Activated CD4-positive, alpha-beta T cell treated with anti-CD3 and anti-CD28 coated beads, Interleukin-2, amount 10 ng/mL, durations not matched to agents 7 days and 5 days (primary cell): ENCODE measurements at regions of chr17 and their contacts with region 1.

Region 1: DNA sequence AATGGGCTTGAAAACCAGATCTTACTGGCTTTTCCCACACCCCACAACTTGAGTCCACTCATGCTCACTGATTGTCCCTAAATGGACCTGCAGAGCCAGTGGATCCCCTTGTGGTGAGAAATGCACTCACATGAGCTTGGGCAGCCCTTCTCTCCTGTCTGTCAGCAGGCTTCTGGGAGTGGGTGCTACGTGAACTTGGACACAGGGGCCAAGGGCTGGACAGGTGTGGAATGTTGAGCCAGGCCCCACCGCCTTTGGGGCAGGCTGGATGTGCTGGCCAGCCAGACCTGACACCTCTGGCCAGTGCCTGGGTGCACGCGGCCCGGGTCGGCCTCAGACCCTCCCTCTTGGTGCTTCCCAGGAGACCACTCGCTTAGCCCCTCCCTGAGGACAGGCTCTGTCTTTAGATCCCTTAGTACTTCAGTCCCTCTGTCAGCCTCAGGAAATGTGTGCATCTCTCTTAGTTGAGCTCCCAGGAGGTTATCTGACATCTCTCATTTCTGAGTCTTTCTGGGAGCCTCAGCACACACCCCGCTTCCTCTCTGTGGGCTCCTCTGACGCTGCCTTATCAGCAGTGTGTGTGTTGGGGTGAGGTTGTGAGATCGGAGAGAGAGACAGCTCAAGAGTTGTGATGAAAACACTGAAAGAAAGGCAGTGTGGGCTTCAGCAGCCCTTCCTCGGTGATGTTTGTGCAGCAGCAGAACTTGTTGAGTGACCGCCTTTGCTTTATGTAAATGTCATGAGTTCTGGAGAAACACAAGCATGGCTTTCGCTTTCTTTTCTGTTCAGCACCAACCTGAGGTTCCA is 117.0 kb downstream of the RAB11FIP4 start:
- DNase-seq: peak; percentile 88
- H3K4me3 Mint-ChIP-seq: peak overlapping the region; percentile 77
- H3K27ac Mint-ChIP-seq: peak overlapping the region; percentile 100
- H3K4me1 Mint-ChIP-seq: peaks cover 55% of the 10 kb centered on the region
- H3K27me3 Mint-ChIP-seq: no peaks in the 10 kb centered on the region

Region 2: DNA sequence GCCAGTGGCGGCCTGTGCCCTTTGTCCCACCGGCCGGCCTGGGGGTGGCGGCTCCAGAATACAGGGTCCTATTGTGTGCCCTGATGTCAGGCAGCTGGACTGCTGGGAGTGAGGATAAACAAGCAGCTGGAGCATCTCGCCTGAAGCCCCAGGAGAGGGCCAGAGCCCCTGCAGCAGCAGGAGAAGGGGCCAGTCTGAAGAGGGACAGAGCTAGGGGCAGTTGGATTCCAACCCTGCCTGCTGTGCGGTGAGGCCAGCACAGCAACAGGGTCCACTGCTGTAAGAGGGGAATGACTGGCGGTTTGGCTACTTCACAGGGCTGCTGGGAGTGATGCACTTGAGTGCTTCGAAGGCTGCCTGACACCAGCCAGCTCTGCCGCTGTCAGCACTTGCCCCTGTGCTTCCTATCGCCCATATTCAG is 92.0 kb before region 1 on chr17:
- CTCF ChIA-PET with region 1: no interaction called
- POLR2A ChIA-PET with region 1: no interaction called
- DNase-seq: no peak
- H3K4me3 Mint-ChIP-seq: no peak overlapping the region
- H3K27ac Mint-ChIP-seq: no peak overlapping the region
- H3K4me1 Mint-ChIP-seq: no peaks in the 10 kb centered on the region
- H3K27me3 Mint-ChIP-seq: no peaks in the 10 kb centered on the region

Region 3: GRCh38 chr17:31487648-31488263 is 20.7 kb before region 1 on chr17:
- CTCF ChIA-PET with region 1: interaction called, 9 read pairs
- POLR2A ChIA-PET with region 1: interaction called, 12 read pairs
- DNase-seq: peak; percentile 93
- H3K4me3 Mint-ChIP-seq: peak overlapping the region; percentile 77
- H3K27ac Mint-ChIP-seq: peak overlapping the region; percentile 81
- H3K4me1 Mint-ChIP-seq: peaks cover 51% of the 10 kb centered on the region
- H3K27me3 Mint-ChIP-seq: peaks cover 4% of the 10 kb centered on the region